ENCODE measurements at regions of chr2 and their contacts with region 1.

Region 1: DNA sequence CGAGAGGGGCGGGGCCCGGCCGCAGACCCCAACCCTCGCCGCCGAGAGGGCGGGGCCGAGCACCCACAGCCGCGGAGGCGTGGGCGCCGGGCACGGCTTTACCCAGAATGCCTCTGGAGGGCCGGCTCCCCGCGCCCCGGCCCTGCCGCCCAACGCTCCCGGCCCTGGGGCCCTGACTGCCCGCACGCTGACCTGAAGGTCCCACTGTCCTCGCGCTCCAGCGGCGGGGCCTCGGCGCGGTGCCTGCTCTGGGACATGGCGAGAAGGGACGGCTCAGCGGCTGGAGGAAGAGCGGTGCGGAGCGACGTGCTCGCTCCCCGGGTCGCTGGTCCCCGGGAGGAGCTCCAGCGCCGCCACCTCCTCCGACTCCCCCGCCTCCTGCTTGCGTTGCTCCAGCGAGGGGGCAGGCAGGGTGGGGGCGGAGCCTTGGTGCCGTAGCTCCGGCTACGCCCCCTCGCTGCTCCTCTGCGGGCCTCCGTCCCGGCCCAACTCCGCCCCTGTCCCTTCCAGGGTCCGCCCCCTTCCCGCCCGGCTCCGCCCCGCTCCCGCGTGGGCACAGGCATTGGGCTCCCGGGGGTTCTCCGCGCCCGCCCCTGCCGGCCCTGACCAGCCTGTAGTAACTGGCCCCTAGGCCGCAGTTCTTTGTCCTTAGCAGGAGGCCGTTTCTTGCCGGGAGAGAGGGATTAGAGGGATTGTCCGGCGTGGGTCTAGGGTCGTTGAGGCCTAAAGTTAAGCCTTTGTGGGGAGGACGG is at the starts of genes PJVK and PRKRA:
- DNase-seq: peak; percentile 98 to 99
- H3K4me3 ChIP-seq: peak within 1 kb of the TSS; percentile 66 to 85
- H3K27ac ChIP-seq: peak within 1 kb of the TSS; percentile 97 to 98
- H3K4me1 ChIP-seq: no peaks in the 10 kb centered on the region
- H3K27me3 ChIP-seq: no peaks in the 10 kb centered on the region
- CTCF ChIP-seq: peak; percentile 5 to 27 (median 24)
- POLR2A ChIP-seq: peak; percentile 91 to 98
- total RNA-seq, gene PJVK: 3.8 to 9.4 (median 7.5) TPM in 3 of 4 donors, not detected in the other
- total RNA-seq, gene PRKRA: 42.1 to 132 (median 68.8) TPM

Region 2: GRCh38 chr2:178480227-178481181 is 29.6 kb after region 1 on chr2 and contains the start of gene PLEKHA3:
- intact Hi-C with region 1: loop called (anchors 2 kb)
- DNase-seq: peak; percentile 96 to 98
- H3K4me3 ChIP-seq: peak within 1 kb of the TSS; percentile 68 to 96
- H3K27ac ChIP-seq: peak within 1 kb of the TSS; percentile 93 to 99
- H3K4me1 ChIP-seq: peaks cover 8 to 12% of the 10 kb centered on the region in 2 donors
- H3K27me3 ChIP-seq: no peaks in the 10 kb centered on the region
- CTCF ChIP-seq: peak in 1 of 4 experiments; percentile 8
- POLR2A ChIP-seq: peak; percentile 71 to 80
- total RNA-seq, gene PLEKHA3: 9.1 to 45.5 (median 14.2) TPM

Measured in uterus (tissue), 4 donors.